Left colon (tissue), 2 donors: ENCODE measurements at regions of chr16 and their contacts with region 1.

Region 1: GRCh38 chr16:46801428-46802049 is 29.4 kb downstream of the C16orf87 start:
- DNase-seq: no peak
- ATAC-seq: peak; percentile 55

Region 2: DNA sequence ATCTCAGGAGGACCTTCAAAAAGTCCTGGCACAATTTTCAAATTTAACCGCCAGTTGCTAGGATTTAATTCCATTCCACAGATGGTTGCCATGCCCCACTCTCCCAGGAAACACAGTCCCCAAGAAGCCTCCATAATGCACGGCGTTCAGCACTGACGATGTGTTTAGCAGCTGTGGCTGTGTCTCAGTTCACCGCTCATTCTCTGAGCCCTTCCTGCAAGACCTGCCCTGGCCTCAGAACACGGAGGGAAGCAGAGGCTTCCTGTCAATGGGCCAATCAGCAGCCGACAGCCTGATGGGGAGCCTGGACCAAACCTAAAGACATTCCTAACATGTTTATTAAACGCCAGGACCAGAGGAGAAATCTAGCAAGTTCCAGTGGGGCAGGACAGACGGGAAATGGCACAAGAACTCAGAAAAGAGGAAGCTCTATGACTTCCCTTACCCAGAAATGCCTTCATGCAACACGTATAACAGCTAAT is 58.3 kb before region 1 on chr16:
- intact Hi-C with region 1: loop called in 1 of 2 experiments (anchors 10 kb)
- DNase-seq: no peak
- ATAC-seq: no peak

Region 3: DNA sequence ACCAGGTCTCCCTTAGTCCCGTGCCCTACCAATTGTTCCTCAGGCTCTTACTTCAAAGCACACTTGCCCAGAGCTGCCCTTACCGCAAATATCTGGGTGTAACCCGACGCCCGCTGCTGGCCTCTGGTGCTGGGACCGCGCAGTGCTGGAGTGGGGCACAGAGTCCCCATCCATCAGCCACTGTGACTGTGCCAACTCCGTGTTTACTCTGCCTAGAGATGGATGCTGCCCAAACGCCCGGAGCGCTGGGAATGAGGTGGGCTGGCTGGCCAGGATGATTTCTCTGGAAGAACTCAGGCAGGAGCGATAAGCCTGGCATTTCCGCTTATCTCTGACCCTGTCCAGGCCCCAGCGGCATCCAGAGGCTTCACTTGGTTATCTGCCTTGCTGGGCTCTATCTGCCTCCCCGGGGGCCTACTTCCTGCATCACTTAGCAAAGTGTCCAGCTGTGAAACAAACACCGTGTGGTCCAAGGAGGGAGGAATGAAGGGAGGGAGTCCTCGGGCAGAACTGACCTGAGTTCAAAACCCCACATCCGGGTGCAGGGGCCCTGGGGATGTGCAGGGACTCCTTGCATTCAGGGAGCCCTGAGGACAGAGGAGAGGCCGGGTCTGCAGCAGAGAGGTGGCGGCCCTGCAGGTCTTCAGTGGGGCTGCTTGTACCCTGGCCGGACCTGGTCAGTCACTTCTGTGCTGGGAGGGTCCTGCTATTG is 44.0 kb before region 1 on chr16:
- intact Hi-C with region 1: no loop called
- DNase-seq: no peak
- ATAC-seq: no peak

Region 4: GRCh38 chr16:47018223-47018891 is 216.8 kb after region 1 on chr16:
- intact Hi-C with region 1: no loop called
- DNase-seq: peak; percentile 31 to 52
- ATAC-seq: peak; percentile 99